Cardiac septum (tissue), 1 donor: ENCODE measurements at regions of chr14 and their contacts with region 1.

Region 1: GRCh38 chr14:59483900-59484638 is at the starts of genes JKAMP and L3HYPDH:
- DNase-seq: peak; percentile 100
- total RNA-seq, gene JKAMP: 21.1 TPM
- total RNA-seq, gene L3HYPDH: 20.3 TPM

Region 2: DNA sequence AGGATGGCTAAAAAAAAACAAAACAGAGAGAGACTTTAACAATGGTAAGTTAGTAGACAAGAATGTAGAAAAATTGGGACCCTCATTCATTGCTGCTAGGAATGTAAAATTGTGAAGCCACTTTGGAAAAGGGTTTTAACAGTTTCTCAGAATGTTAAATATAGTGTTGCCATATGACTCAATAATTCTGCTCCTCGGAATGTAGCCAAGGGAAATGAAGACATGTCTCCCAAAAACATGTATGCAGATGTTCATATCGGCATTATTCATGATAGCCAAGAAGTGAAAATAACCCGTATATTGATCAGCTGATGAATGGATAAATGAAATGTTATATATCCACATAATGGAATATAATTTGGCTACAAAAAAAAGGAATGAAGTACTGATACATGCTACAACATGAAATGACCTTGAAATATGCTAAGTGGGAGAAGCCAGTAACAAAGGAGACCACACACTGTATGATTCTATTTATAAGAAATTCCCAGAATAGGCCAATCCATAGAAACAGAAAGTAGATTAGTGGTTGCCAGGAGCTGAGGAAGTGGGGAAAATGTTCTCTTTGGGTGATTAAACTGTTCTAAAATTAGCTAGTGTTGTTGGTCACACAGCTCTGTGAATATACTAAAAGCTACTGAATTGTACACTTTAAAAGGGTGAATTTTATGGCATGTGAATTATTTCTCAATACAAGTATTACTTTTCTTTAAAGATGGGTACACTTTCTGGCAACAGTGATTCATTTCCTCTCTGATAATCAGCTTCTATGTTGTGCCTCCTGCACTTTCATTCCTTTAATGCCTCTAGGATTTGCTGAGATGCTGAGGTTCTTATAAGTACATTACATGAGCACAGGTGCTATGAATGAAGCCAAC is 163.1 kb before region 1 on chr14:
- intact Hi-C with region 1: no loop called
- DNase-seq: no peak

Region 3: GRCh38 chr14:59464486-59465315 is 19.4 kb before region 1 on chr14:
- intact Hi-C with region 1: loop called (anchors 2 kb)
- DNase-seq: peak; percentile 78

Region 4: DNA sequence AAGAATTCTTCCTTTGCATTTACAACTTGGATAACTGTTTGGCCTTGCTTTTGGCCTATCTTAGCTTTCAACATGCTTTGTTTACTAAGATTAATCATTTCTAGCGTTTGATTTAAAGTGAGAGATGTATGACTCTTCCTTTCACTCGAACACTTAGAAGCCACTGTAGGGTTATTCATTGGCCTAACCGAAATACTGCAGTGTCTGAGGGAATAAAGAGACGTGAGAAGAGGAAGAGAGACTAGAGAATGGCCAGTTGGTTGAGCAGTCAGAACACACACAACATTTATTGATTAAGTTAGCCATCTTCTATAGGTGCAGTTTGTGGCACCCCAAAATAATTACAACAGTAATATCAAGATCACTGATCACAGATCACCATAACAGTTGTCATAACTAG is 154.8 kb after region 1 on chr14:
- intact Hi-C with region 1: no loop called
- DNase-seq: no peak

Region 5: GRCh38 chr14:60248697-60249318 is 764.7 kb after region 1 on chr14 and contains the start of gene PPM1A:
- intact Hi-C with region 1: no loop called
- DNase-seq: peak; percentile 98
- total RNA-seq, gene PPM1A: 88.5 TPM